ENCODE measurements at regions of chr20 and their contacts with region 1.

Region 1: DNA sequence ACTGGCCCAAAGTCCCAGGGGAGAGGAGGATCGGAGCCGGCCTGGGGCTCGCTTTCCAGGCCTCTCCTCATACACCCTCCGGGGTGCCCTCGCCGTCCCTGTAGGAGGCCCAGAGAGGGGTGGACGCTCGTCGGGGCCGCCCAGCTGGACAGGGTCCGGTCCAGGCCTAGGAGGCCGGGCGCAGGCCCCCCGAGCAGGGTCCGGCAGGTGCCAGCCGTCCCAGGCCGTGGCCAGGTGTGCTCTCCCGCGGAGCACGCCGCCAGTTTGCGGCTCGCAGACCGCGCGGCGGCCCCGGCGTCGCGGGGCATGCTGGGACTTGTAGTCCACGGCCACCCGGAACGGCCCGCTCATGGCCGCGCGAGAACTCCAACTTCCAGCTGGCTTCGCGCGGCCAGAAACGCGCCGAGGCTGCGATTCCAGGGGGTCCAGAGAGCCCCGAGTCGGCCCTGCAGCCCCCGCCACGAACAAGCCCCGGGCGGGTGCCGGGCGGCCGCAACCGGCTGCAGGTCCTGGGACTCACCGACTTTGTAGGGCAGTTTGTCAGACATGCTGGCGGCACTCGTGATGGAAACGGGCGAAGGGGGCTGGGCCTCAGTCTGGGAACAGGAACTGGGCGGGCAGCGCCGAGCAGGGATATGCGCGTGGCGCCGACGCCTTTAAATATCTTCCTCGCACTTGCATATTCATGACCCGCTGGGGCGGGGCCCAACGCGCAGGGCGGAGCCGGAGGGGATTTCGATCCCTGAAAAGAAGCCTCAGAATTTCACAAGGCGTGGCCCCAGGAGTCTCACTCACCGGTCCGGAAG is at the start of gene AHCY:
- DNase-seq: peak; percentile 78 to 96 (median 87)
- ATAC-seq: peak; percentile 94
- H3K4me3 ChIP-seq: peak within 1 kb of the TSS; percentile 82
- H3K4me3 Mint-ChIP-seq: peak within 1 kb of the TSS; percentile 98
- H3K27ac ChIP-seq: peak within 1 kb of the TSS; percentile 65 to 84
- H3K27ac Mint-ChIP-seq: peak within 1 kb of the TSS; percentile 91
- H3K4me1 ChIP-seq: peaks cover 17% of the 10 kb centered on the region
- H3K4me1 Mint-ChIP-seq: peaks cover 11% of the 10 kb centered on the region
- H3K27me3 ChIP-seq: no peaks in the 10 kb centered on the region
- H3K27me3 Mint-ChIP-seq: no peaks in the 10 kb centered on the region
- CTCF ChIP-seq: no peak
- total RNA-seq, gene AHCY: 16.7 to 16.9 TPM

Region 2: DNA sequence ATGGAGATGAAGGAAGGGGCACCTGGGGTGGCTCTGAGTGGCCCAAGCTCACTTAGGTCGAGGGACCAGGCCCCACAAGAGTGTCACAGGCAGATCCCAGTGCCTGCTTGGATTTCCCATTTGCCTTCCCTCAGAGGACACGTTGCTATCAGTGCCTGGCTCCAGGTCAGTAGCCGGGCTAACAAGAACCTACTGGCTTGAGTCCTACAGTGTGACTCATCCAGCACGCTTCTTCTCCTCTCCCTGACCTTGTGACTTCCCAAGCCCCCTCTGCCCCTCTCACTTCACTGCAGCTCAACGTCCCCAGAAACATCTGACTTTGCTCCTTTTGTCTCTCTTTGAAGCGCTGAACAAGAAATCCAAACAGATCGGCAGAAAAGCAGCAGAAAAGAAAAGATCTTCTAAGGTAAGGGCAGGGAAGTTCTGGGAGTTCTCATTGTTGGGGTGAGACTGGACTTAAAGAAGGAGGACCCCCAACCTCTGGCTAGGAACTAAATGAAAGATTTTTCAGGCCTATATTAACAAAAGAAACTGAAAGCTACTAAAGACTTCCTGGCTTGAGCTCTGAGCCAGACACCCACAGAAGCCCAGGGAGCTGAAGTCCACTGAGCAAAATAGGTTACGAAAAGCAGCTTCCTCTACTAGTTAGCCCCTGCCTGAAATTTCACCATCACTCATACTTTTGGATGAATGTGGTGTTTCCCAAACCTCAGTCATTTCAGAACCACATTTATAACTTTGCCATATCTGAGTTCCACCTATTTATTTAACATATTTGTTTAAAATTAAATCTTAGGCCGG is 40.2 kb before region 1 on chr20:
- CTCF ChIA-PET with region 1: no interaction called
- POLR2A ChIA-PET with region 1: no interaction called
- intact Hi-C with region 1: no loop called
- DNase-seq: peak in 2 of 14 experiments; percentile 22 to 29
- ATAC-seq: no peak
- H3K4me3 ChIP-seq: no peak overlapping the region
- H3K4me3 Mint-ChIP-seq: no peak overlapping the region
- H3K27ac ChIP-seq: no peak overlapping the region
- H3K27ac Mint-ChIP-seq: no peak overlapping the region
- H3K4me1 ChIP-seq: no peaks in the 10 kb centered on the region
- H3K4me1 Mint-ChIP-seq: no peaks in the 10 kb centered on the region
- H3K27me3 ChIP-seq: no peaks in the 10 kb centered on the region
- H3K27me3 Mint-ChIP-seq: no peaks in the 10 kb centered on the region
- CTCF ChIP-seq: no peak

Region 3: DNA sequence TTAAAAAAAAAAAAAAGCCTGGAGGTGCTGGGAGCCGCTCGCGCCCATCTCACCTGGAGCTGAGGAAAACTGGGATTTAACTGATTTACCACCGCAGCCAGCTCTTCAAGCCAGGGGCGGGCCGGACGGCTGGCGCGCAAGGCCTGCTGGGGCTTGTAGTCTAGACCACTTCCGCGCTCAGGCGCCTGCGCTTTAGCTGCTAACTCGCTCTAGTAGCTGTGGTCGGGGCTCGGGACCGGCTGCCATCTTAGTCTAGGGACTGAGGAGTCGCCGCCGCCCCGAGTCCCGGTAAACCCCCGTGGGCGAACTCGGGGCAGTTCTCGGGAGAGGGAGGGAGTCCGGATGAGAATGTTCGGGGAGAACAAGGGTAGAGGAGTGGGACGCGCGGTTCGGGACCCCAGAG is 60.1 kb after region 1 on chr20 and contains the start of gene ITCH:
- CTCF ChIA-PET with region 1: no interaction called
- POLR2A ChIA-PET with region 1: interaction called, 8 read pairs
- intact Hi-C with region 1: loop called in 1 of 2 experiments (anchors 2 kb)
- DNase-seq: peak; percentile 86 to 96 (median 89)
- ATAC-seq: peak; percentile 100
- H3K4me3 ChIP-seq: peak within 1 kb of the TSS; percentile 98
- H3K4me3 Mint-ChIP-seq: peak within 1 kb of the TSS; percentile 100
- H3K27ac ChIP-seq: peak within 1 kb of the TSS; percentile 72 to 78
- H3K27ac Mint-ChIP-seq: peak within 1 kb of the TSS; percentile 95
- H3K4me1 ChIP-seq: peaks cover 47% of the 10 kb centered on the region
- H3K4me1 Mint-ChIP-seq: peaks cover 37% of the 10 kb centered on the region
- H3K27me3 ChIP-seq: no peaks in the 10 kb centered on the region
- H3K27me3 Mint-ChIP-seq: no peaks in the 10 kb centered on the region
- CTCF ChIP-seq: no peak
- total RNA-seq, gene ITCH: 44.2 to 47.0 TPM

Region 4: DNA sequence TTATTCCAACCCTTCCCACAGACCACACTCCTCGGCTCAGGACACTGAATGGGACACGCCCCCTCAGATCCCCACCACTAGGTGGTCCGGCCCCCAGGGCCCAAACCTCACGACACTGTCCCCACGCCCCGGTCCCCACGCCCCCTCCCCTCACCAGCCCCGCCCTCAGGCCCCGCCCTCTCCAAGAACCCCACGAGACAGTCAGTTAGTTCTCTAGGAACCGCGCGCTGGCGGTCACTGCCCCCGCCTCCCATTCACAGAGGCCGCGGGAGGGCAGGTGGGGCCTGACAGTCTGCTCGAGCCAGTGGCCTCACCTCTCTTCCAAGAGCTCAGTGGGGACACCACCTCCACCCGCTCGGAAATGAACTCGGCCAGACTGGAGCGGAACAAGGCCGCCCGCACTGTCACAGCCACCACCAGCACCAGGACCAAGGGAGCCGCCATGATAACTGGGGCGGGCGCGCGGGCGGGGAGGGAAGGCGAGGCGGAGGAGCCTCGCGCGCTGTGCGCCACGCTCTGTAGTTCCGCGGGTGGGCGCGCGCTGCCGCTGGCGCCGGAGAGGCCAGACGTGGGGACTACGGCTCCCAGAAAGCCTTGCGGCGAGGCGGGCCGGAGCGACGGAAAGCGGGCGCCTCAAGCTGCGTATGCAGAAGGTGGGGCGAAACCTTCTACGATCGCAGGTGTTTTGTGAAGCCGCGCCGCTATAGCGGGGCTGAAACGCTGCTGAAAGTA is 373.9 kb after region 1 on chr20 and contains the start of gene PIGU:
- CTCF ChIA-PET with region 1: no interaction called
- POLR2A ChIA-PET with region 1: no interaction called
- intact Hi-C with region 1: loop called in 1 of 2 experiments (anchors 2 kb)
- DNase-seq: peak; percentile 93 to 98 (median 95)
- ATAC-seq: peak; percentile 96
- H3K4me3 ChIP-seq: peak within 1 kb of the TSS; percentile 88
- H3K4me3 Mint-ChIP-seq: peak within 1 kb of the TSS; percentile 93
- H3K27ac ChIP-seq: peak within 1 kb of the TSS; percentile 53 to 87
- H3K27ac Mint-ChIP-seq: peak within 1 kb of the TSS; percentile 88
- H3K4me1 ChIP-seq: peaks cover 13% of the 10 kb centered on the region
- H3K4me1 Mint-ChIP-seq: peaks cover 26% of the 10 kb centered on the region
- H3K27me3 ChIP-seq: no peaks in the 10 kb centered on the region
- H3K27me3 Mint-ChIP-seq: no peaks in the 10 kb centered on the region
- CTCF ChIP-seq: peak; percentile 21
- total RNA-seq, gene PIGU: 4.6 to 5.5 TPM

Region 5: DNA sequence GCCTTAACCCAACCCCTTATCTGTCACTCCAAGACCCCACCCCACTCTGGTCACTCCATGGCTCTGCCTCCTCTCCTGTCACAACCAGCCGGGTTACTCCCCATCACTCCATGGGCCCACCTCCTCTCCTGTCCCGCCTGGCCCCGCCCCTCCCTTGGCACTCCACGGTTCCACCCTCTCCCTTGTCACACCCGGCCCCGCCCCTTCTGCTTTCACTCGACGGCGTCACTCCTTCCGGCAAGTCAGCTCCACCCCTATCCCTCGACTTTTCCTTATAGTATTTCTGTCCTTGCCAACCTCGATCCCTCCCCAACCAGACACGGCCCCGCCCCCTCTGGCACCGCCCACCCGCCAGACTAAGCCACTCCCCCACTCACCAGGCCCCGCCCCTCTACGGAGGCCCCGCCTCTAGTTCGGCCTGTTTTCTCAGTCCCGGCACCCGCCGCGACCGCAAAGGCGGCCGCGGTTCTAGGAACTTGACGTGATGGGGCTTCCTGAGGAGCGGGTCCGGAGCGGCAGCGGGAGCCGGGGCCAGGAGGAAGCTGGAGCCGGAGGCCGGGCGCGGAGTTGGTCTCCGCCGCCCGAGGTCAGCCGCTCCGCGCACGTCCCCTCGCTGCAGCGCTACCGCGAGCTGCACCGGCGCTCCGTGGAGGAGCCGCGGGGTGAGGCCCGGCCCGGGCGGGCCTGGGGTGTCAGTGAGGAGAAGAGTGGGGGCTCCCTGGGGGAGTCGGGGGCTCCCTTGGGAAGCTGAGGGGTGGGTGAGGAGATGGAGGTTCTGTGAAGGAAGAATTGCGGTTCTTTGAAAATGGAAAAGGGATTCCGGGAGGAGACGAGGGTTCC is 573.5 kb after region 1 on chr20 and contains the start of gene ACSS2:
- CTCF ChIA-PET with region 1: no interaction called
- POLR2A ChIA-PET with region 1: no interaction called
- intact Hi-C with region 1: loop called in 1 of 2 experiments (anchors 5 kb)
- DNase-seq: peak; percentile 91 to 99 (median 94)
- ATAC-seq: peak; percentile 81
- H3K4me3 ChIP-seq: peak within 1 kb of the TSS; percentile 70
- H3K4me3 Mint-ChIP-seq: peak within 1 kb of the TSS; percentile 90
- H3K27ac ChIP-seq: peak within 1 kb of the TSS; percentile 11 to 42
- H3K27ac Mint-ChIP-seq: peak within 1 kb of the TSS; percentile 81
- H3K4me1 ChIP-seq: peaks cover 51% of the 10 kb centered on the region
- H3K4me1 Mint-ChIP-seq: peaks cover 66% of the 10 kb centered on the region
- H3K27me3 ChIP-seq: no peaks in the 10 kb centered on the region
- H3K27me3 Mint-ChIP-seq: no peaks in the 10 kb centered on the region
- CTCF ChIP-seq: no peak
- total RNA-seq, gene ACSS2: 15.6 to 18.8 TPM

Region 6: GRCh38 chr20:35146920-35147574 is 844.1 kb after region 1 on chr20 and contains the start of gene EDEM2:
- CTCF ChIA-PET with region 1: no interaction called
- POLR2A ChIA-PET with region 1: no interaction called
- intact Hi-C with region 1: loop called in 1 of 2 experiments (anchors 5 kb)
- DNase-seq: peak; percentile 83 to 97 (median 92)
- ATAC-seq: peak; percentile 85
- H3K4me3 ChIP-seq: peak within 1 kb of the TSS; percentile 77
- H3K4me3 Mint-ChIP-seq: peak within 1 kb of the TSS; percentile 96
- H3K27ac ChIP-seq: peak within 1 kb of the TSS; percentile 37 to 55
- H3K27ac Mint-ChIP-seq: peak within 1 kb of the TSS; percentile 93
- H3K4me1 ChIP-seq: peaks cover 32% of the 10 kb centered on the region
- H3K4me1 Mint-ChIP-seq: peaks cover 44% of the 10 kb centered on the region
- H3K27me3 ChIP-seq: no peaks in the 10 kb centered on the region
- H3K27me3 Mint-ChIP-seq: no peaks in the 10 kb centered on the region
- CTCF ChIP-seq: no peak
- total RNA-seq, gene EDEM2: 12.2 to 12.6 TPM